RWPE1 (cell line): ENCODE measurements at regions of chr7 and their contacts with region 1.

Region 1: GRCh38 chr7:48875045-48875916 is 49.1 kb upstream of the CDC14C start:
- DNase-seq: peak; percentile 26
- H3K27ac ChIP-seq: no peak overlapping the region
- CTCF ChIP-seq: peak; percentile 36; the same call in 1 of the 2 replicates

Region 2: DNA sequence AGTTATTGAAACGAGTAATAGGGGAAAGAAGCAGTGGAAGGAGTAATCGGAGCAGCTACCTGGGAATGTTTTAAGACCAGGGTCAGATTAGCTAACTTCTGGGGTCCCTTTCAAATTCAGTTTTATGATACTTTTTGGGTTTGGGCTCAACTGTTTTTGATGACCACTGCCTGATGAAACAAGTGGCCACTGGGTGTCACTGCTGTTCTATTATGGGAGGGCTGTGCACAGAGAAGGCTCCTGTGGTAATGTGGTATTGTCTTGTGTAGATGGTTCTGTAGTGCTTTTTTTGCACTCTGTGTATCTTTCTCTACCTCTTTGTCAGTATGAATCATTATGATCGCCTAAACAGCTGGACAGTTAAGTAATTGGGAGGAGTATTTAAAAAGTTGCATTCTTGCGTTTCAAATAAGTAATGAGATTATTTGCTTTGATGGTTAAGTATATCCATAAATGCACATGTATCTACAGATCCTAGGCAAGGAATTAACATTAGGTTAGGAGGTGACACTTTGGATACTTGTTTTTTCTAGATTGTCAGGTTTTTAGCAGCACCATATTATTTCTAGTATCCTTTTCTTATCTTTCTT is 575.6 kb before region 1 on chr7:
- CTCF ChIA-PET with region 1: interaction called, 12 read pairs
- POLR2A ChIA-PET with region 1: no interaction called
- DNase-seq: peak; percentile 71
- H3K27ac ChIP-seq: no peak overlapping the region
- CTCF ChIP-seq: peak; percentile 91

Region 3: GRCh38 chr7:48347881-48348280 is 527.4 kb before region 1 on chr7:
- CTCF ChIA-PET with region 1: interaction called, 10 read pairs
- POLR2A ChIA-PET with region 1: no interaction called
- DNase-seq: no peak
- H3K27ac ChIP-seq: no peak overlapping the region
- CTCF ChIP-seq: no peak